ENCODE measurements at regions of chr2 and their contacts with region 1.

Region 1: DNA sequence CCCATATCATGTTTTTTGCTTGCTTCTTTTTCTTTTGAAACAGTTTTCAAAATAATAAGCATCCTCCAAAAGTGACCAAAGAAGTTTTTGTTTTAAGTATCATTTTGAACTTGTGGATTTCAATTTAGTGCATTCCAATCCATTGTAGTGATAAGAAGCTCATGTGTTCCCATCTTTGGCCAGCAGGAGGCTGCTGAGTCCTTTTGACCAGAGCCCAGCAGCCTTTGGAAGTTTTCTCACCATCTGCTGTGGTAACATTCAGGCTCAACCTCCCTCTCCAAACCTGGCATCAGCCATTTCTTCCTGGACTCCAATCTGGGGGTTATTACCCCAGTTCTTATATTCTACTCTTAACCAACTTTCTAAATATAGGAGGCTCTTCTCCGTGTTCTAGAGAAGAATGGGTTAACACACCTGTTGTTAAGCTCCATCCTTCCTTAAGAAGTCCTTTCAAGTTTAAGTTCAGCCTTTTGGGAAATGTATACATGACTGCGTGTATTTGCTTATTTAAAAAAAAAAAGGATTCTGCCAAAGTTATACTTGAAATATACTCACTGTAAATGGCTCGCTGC is 39.0 kb upstream of the MAL start:
- DNase-seq: peak; percentile 52
- H3K4me3 ChIP-seq: no peak overlapping the region
- H3K27ac ChIP-seq: no peak overlapping the region
- H3K4me1 ChIP-seq: no peaks in the 10 kb centered on the region
- H3K27me3 ChIP-seq: no peaks in the 10 kb centered on the region
- CTCF ChIP-seq: peak; percentile 61 to 76
- POLR2A ChIP-seq: no peak

Region 2: GRCh38 chr2:94956797-94957391 is 29.6 kb before region 1 on chr2:
- CTCF ChIA-PET with region 1: interaction called, 26 read pairs
- POLR2A ChIA-PET with region 1: no interaction called
- dilution Hi-C with region 1: no loop called
- intact Hi-C with region 1: no loop called
- DNase-seq: peak; percentile 30
- H3K4me3 ChIP-seq: no peak overlapping the region
- H3K27ac ChIP-seq: no peak overlapping the region
- H3K4me1 ChIP-seq: no peaks in the 10 kb centered on the region
- H3K27me3 ChIP-seq: no peaks in the 10 kb centered on the region
- CTCF ChIP-seq: peak; percentile 75
- POLR2A ChIP-seq: no peak

Region 3: DNA sequence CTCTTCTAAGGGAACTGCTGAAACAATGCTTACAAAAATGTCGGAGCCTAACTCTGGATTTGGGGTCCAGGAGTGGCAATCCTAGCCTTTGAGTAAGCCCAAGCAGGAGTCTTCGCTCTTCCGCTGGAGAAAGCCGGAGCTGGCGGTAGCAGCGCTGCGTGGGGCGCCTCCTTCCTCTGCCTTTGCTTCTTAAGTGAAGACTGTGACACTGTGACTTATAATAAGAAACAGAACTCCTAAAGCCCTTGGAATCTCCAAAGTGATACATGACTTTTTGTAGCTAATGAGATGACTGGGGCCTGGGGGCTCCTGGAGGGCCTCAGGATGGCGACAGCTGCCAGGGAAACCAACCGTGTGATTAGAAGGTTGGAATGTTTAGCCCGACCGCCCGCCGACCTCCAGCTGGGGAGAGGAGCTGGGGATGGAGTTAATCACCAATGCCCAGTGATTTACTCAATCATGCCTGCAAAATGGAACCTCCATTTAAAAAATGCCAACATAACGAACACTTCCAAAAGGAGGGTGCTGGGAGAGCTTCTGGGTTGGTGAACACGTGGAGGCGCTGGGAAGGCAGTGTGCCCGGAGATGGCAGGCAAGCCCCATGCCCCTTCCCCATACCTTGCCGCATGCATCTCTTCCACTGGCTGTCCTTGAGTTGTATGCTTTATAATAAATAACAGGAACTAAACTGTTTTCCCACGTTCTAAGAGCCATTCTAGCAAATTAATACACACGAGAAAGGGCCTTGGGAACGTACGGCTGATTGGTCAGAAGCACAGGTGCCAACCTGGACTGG is 10.0 kb after region 1 on chr2:
- CTCF ChIA-PET with region 1: interaction called, 16 read pairs
- POLR2A ChIA-PET with region 1: no interaction called
- dilution Hi-C with region 1: no loop called
- intact Hi-C with region 1: no loop called
- DNase-seq: no peak
- H3K4me3 ChIP-seq: no peak overlapping the region
- H3K27ac ChIP-seq: no peak overlapping the region
- H3K4me1 ChIP-seq: no peaks in the 10 kb centered on the region
- H3K27me3 ChIP-seq: peaks cover 2 to 3% of the 10 kb centered on the region in 2 experiments
- CTCF ChIP-seq: no peak
- POLR2A ChIP-seq: no peak

Region 4: DNA sequence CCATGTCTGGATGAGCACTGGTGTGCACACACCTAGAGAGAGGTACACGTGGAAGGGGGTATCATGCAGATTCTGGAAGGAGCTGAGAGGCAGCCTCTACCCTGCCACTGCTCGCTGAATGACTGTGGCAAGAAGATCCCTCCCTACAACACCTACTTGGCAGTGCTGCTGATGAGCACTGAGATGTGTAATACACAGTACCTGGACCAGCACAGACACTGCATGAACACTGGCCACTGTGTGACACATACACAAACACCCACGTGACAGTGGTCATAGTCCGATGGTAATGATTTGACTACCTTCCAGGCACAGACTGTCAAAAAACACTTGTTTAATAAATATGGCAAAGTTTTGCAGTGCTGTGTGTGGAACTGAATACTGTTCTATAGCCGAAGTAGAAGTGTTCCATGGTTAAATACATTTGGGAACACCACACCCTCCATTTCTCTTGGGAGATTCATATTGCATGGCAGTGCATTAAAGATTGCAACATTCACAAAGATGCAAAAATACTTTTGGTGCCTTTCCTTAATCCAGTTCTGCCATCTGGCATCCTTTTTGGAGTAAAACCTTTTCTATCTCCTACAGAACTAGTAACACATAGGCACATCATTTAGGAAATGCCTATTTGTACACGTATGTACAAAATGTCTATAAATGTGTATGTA is 105.5 kb after region 1 on chr2:
- CTCF ChIA-PET with region 1: no interaction called
- POLR2A ChIA-PET with region 1: no interaction called
- dilution Hi-C with region 1: no loop called
- intact Hi-C with region 1: no loop called
- DNase-seq: no peak
- H3K4me3 ChIP-seq: no peak overlapping the region
- H3K27ac ChIP-seq: no peak overlapping the region
- H3K4me1 ChIP-seq: no peaks in the 10 kb centered on the region
- H3K27me3 ChIP-seq: no peaks in the 10 kb centered on the region
- CTCF ChIP-seq: no peak
- POLR2A ChIP-seq: no peak

Region 5: DNA sequence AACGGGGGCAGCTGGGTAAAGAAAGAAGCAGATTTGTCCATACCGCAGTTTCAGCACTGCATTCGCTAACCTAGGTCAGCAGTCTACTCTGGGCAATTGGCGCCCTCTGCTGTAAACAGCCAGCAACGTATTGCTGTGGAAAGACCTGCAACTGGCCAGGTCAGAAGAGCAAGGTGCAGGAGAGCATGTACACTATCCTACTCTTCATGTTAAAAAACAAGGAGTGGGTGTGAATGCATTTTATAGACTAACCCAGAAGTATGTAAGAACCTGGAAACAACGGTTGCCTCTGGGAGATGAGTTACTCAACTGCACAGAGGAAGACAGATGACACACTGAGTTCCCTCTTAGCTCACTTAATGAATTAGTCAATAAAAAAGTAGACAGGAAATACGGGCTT is 128.9 kb after region 1 on chr2:
- CTCF ChIA-PET with region 1: interaction called, 14 read pairs
- POLR2A ChIA-PET with region 1: no interaction called
- dilution Hi-C with region 1: no loop called
- intact Hi-C with region 1: loop called (anchors 1 kb)
- DNase-seq: peak; percentile 64
- H3K4me3 ChIP-seq: no peak overlapping the region
- H3K27ac ChIP-seq: no peak overlapping the region
- H3K4me1 ChIP-seq: peaks cover 3% of the 10 kb centered on the region
- H3K27me3 ChIP-seq: no peaks in the 10 kb centered on the region
- CTCF ChIP-seq: peak; percentile 79 to 80
- POLR2A ChIP-seq: no peak